ENCODE measurements at regions of chr6 and their contacts with region 1.

Region 1: DNA sequence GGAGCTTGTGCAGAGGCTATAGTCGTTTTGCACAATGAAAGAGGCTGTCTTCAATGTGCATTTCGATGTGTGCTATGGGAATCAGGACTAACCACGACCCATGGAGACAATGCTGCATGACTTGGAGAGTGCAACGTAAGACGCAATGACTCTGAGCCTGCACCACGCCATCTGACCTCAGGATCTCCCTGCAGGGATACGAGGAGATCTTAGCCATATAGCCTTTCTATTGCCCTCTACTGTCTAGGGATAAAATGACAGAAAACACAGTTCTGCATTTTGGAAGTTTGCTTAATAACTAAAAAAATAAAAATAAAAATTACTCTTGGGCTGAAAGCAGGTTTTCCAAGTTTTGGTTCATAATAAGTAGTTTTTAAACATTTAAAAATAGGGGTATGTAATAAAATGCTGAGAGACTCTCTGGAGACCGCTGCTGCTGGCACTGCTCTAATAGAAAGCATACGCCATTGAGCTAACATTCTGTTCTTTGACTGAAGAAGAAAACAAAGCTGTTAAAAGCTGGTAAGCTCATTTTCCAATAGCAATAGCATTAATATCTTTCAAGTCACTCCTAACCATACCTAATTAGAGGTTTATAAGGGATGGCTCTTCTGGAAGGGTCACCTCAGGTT is 87.2 kb downstream of the PDE7B start:
- DNase-seq: peak; percentile 30
- ATAC-seq: no peak
- H3K4me3 ChIP-seq: no peak overlapping the region
- H3K27ac ChIP-seq: no peak overlapping the region
- H3K4me1 ChIP-seq: peaks cover 41% of the 10 kb centered on the region
- H3K27me3 ChIP-seq: no peaks in the 10 kb centered on the region
- CTCF ChIP-seq: peak; percentile 44

Region 2: GRCh38 chr6:135880066-135880972 is 58.4 kb before region 1 on chr6:
- CTCF ChIA-PET with region 1: no interaction called
- POLR2A ChIA-PET with region 1: no interaction called
- intact Hi-C with region 1: loop called (anchors 5 kb)
- DNase-seq: peak; percentile 60
- ATAC-seq: peak; percentile 96
- H3K4me3 ChIP-seq: peak overlapping the region; percentile 26; the same call in 1 of the 2 replicates
- H3K27ac ChIP-seq: no peak overlapping the region
- H3K4me1 ChIP-seq: peaks cover 15% of the 10 kb centered on the region
- H3K27me3 ChIP-seq: no peaks in the 10 kb centered on the region
- CTCF ChIP-seq: no peak

Region 3: GRCh38 chr6:135922174-135922573 is 16.5 kb before region 1 on chr6:
- CTCF ChIA-PET with region 1: no interaction called
- POLR2A ChIA-PET with region 1: no interaction called
- intact Hi-C with region 1: loop called (anchors 1 kb)
- DNase-seq: peak; percentile 93
- ATAC-seq: peak; percentile 96
- H3K4me3 ChIP-seq: no peak overlapping the region
- H3K27ac ChIP-seq: peak overlapping the region; percentile 89
- H3K4me1 ChIP-seq: peaks cover 21% of the 10 kb centered on the region
- H3K27me3 ChIP-seq: no peaks in the 10 kb centered on the region
- CTCF ChIP-seq: no peak

Measured in PC-3 (cell line).